HAP-1 (cell line): ENCODE measurements at regions of chr11 and their contacts with region 1.

Region 1: DNA sequence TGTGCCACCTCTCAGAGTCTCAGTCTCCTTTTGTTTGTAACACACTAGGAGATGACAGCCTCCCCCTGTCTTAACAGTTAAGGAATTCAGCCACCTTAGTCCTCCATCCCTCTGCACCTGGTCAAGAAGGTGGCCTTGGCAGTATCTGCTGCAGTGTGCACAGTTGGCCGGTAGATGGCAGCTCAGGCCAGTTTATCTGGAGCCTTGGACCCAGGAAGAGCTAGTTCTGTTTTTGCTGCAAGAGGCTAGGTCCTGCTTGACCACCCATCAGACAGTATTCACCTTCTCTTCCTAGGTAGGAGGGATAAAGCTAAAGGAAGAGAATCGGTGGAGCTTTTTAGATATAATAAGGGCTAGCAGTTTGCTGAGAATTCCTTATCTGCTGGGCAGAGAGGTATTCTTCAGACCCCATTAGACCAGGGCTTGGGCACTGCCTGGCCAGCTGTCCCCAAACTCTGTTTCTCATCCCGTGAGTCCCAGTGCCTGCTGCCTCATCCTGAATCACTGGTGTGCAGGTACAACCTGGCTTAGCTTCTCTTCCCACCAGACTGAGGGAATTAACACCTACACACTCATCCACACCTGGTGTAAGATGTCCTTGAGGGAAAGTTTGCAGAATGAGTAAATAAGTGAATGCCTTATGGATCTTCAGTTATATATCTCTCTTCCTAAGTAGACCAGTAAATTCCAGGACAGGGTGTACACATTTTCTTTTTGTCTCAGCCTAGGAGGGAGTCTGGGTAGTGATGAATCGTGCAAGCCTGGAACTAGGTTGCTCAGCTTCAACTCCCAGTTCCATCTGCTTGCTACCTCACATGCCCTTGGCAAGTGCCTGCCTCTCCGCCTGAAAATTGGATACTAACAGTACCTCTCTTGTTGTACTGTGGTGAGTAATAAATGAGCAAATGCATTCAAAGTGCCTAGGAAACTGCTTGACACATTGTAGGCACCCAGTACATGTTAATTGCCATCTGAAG is 70.8 kb upstream of the NARS2 start:
- DNase-seq: peak; percentile 61 to 82
- H3K4me3 ChIP-seq: no peak overlapping the region
- H3K4me1 ChIP-seq: no peaks in the 10 kb centered on the region
- H3K27me3 ChIP-seq: peaks cover 9% of the 10 kb centered on the region

Region 2: GRCh38 chr11:79076526-79077115 is 431.1 kb after region 1 on chr11:
- in situ Hi-C with region 1: loop called (anchors 10 kb)
- DNase-seq: peak; percentile 58 to 72
- H3K4me3 ChIP-seq: no peak overlapping the region
- H3K4me1 ChIP-seq: no peaks in the 10 kb centered on the region
- H3K27me3 ChIP-seq: no peaks in the 10 kb centered on the region